ENCODE measurements at regions of chr13 and their contacts with region 1.

Region 1: DNA sequence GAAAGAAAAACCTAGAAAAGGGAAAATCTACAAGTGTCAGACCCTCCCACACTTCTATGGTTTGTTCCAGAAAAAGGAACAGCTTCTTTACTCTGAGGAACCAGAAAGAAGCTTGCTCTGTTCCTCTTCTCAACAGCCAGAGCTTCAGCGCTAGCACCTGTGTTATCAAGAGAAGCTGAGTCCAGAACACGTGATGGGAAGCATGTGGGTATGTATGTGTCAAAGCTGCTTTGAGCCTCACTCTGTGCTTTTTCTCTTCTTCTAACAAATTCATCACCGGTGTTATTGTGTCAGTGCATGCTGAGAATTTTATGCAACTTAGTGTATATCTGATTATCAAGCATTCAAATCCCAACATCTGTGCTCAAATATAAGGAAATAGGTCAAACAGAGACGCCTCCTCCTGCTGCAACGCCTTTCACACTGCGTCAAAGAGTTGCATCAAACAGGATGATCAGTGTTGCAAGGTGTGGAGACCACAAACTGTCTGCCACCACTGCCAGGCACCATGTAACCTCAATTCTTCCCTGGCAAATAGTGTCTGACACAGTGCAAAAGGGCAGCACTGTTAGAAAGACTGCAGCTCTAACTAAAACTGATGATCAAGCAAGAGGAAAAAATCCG is 83.9 kb downstream of the LRRC63 start:
- DNase-seq: peak in 9 of 10 donors; percentile 27 to 91 (median 76)
- ATAC-seq: peak; percentile 88 to 90
- H3K4me3 Mint-ChIP-seq: peak overlapping the region; percentile 38 to 84 (median 72)
- H3K27ac Mint-ChIP-seq: peak overlapping the region; percentile 85 to 98 (median 96)
- H3K4me1 Mint-ChIP-seq: peaks cover 33 to 65% (median 63%) of the 10 kb centered on the region in 4 donors
- H3K27me3 Mint-ChIP-seq: no peaks in the 10 kb centered on the region

Region 2: DNA sequence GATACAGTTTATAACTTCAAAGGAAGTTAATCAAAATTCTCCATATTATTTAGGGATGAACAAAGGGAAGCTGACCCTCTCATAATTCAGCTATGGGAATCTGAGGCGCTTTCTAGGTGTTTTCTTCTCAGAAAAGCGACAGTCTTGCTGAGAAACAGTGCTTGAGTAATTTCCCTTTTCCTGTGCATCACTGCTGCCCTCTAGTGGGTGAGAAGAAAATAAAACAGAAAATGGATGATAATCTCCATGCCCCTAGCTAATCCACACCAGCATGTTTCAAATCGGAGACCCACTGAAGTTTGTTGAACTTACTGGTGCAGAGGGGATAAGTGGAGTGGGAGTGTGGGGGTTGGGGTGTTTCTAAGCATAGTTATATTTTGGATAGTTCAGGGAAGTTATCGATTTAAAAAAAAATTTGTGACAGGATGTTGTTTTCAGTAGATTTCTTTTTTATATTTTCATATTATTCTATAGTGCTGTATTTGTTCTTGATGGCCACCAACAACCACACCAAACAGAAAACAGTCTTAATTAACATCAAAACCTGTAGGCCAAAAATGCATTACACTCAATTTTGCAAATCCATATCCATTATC is 135.0 kb before region 1 on chr13:
- POLR2A ChIA-PET with region 1: interaction called, 10 read pairs
- DNase-seq: peak in 7 of 10 donors; percentile 34 to 80 (median 49)
- ATAC-seq: peak; percentile 78 to 84
- H3K4me3 Mint-ChIP-seq: peak overlapping the region; percentile 49 to 85 (median 75)
- H3K27ac Mint-ChIP-seq: peak overlapping the region; percentile 81 to 98 (median 92)
- H3K4me1 Mint-ChIP-seq: peaks cover 31 to 57% (median 56%) of the 10 kb centered on the region in 4 donors
- H3K27me3 Mint-ChIP-seq: no peaks in the 10 kb centered on the region

Region 3: DNA sequence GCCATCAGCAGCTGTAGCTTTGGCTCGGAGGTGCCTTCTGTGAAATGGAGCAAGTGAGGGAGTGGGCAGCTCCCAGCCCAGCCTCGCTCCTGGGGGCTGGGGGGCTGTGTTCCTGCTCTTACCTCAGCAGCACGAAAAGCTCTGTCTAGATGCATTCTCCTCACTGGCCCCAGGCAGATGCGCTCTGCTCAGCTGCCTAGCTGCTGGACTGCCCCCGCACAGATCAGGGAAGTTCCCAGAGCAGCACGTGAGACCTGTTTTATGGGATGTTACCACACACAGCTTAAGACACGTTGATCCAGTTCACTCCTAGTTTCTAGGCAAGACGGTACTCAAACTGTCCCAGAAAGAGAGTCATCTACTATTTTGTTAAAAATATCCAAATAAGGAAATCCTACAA is 127.3 kb before region 1 on chr13:
- POLR2A ChIA-PET with region 1: interaction called, 24 read pairs
- DNase-seq: peak in 3 of 10 donors; percentile 27 to 47 (median 41)
- ATAC-seq: peak; percentile 31 to 49
- H3K4me3 Mint-ChIP-seq: peak overlapping the region; percentile 52 to 96 (median 76)
- H3K27ac Mint-ChIP-seq: peak overlapping the region; percentile 89 to 99 (median 96)
- H3K4me1 Mint-ChIP-seq: peaks cover 58 to 97% (median 92%) of the 10 kb centered on the region in 4 donors
- H3K27me3 Mint-ChIP-seq: no peaks in the 10 kb centered on the region

Region 4: DNA sequence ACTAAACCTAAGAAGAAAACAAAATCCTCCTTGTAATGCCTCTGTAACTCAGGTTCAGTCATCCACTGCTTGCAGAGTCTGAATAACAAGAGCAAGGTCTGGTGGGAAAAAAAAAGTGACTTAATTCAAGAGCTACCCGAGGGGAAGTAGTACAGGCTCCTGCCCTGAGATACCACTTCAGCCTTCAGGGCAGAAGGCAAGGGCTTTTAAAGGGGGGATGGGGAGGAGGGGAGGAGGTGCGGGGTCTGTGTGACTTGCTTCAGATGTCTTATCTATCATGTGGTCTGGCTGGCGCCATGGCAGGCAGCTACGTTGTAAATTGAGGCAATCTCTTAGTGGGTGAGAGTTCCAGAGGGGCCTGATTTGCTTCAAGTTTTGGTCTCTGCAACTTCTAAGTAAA is 17.1 kb before region 1 on chr13:
- POLR2A ChIA-PET with region 1: no interaction called
- DNase-seq: no peak
- ATAC-seq: peak in 1 of 2 donors; percentile 33
- H3K4me3 Mint-ChIP-seq: no peak overlapping the region
- H3K27ac Mint-ChIP-seq: peak overlapping the region in 4 of 10 donors; percentile 5 to 74 (median 42)
- H3K4me1 Mint-ChIP-seq: peaks cover 0 to 8% (median 4%) of the 10 kb centered on the region in 4 donors
- H3K27me3 Mint-ChIP-seq: no peaks in the 10 kb centered on the region

Region 5: DNA sequence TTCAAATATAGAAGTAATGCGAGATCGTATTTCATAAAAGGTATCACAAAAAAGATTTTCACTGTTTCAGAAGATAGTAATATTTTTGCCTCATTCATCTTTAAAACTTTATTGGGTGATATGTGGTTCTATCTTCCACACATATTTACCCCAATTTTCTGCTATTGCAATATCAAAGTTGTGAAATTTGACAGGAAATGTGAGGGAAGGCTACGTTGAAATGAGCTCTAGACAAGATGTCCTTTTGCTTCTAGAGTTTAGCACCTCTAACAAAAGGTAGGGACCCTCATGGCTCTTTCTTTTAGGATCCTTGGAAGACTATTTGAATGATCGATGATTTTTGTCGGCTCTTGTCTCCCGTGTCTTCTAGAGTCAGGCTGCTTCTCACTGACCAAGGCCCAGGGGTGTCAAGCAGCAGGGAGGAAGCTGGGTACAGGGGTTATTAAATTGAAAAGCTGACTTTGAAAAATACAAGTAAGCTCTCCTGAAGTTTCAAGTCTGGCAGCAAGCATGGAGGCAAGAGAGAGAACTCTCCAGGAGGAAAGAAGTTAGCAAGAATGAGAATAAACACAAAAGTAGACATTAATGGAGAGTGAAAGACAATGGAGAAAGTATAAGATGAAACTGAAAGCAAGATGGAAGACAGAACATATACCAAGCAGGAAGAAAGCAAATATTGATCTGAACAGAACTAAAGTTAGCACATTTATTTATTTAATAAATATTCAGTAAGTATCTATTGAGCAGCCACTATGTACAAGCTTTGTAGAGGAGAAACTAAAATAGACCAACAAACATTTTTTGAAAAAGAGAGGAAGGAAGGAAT is 18.0 kb after region 1 on chr13:
- POLR2A ChIA-PET with region 1: interaction called, 74 read pairs
- DNase-seq: peak in 1 of 10 donors; percentile 29
- ATAC-seq: peak; percentile 51 to 68
- H3K4me3 Mint-ChIP-seq: peak overlapping the region; percentile 64 to 87 (median 81)
- H3K27ac Mint-ChIP-seq: peak overlapping the region; percentile 86 to 96 (median 94)
- H3K4me1 Mint-ChIP-seq: peaks cover 19 to 40% (median 35%) of the 10 kb centered on the region in 4 donors
- H3K27me3 Mint-ChIP-seq: peaks cover 0 to 1% (median 0%) of the 10 kb centered on the region in 5 donors

Region 6: GRCh38 chr13:46321494-46322225 is 26.1 kb after region 1 on chr13:
- POLR2A ChIA-PET with region 1: interaction called, 74 read pairs
- DNase-seq: peak; percentile 42 to 86 (median 74)
- ATAC-seq: peak; percentile 83 to 89
- H3K4me3 Mint-ChIP-seq: peak overlapping the region; percentile 77 to 93 (median 86)
- H3K27ac Mint-ChIP-seq: peak overlapping the region; percentile 94 to 99 (median 96)
- H3K4me1 Mint-ChIP-seq: peaks cover 26 to 47% (median 43%) of the 10 kb centered on the region in 4 donors
- H3K27me3 Mint-ChIP-seq: peaks cover 0 to 2% (median 0%) of the 10 kb centered on the region in 5 donors